ENCODE measurements at regions of chr4 and their contacts with region 1.

Region 1: GRCh38 chr4:46900082-46900481 is 9.0 kb downstream of the COX7B2 start:
- DNase-seq: no peak
- H3K4me3 ChIP-seq: no peak overlapping the region
- CTCF ChIP-seq: no peak
- POLR2A ChIP-seq: no peak

Region 2: GRCh38 chr4:46870411-46870810 is 29.7 kb before region 1 on chr4:
- intact Hi-C with region 1: loop called (anchors 2 kb)
- DNase-seq: no peak
- H3K4me3 ChIP-seq: no peak overlapping the region
- CTCF ChIP-seq: no peak
- POLR2A ChIP-seq: no peak